MCF 10A (cell line): ENCODE measurements at regions of chr18 and their contacts with region 1.

Region 1: GRCh38 chr18:58671111-58671631 is at the start of gene MALT1:
- DNase-seq: peak; percentile 91
- H3K4me3 Mint-ChIP-seq: peak within 1 kb of the TSS; percentile 97
- H3K27ac Mint-ChIP-seq: peak within 1 kb of the TSS; percentile 78
- H3K4me1 Mint-ChIP-seq: peaks cover 55% of the 10 kb centered on the region
- H3K27me3 Mint-ChIP-seq: no peaks in the 10 kb centered on the region
- CTCF ChIP-seq: no peak
- total RNA-seq, gene MALT1: 28.5 and 33.0 TPM in 2 replicates

Region 2: GRCh38 chr18:58541789-58542425 is 129.3 kb before region 1 on chr18:
- CTCF ChIA-PET with region 1: no interaction called
- POLR2A ChIA-PET with region 1: interaction called, 32 read pairs
- intact Hi-C with region 1: loop called (anchors 2 kb)
- DNase-seq: peak; percentile 95
- H3K4me3 Mint-ChIP-seq: no peak overlapping the region
- H3K27ac Mint-ChIP-seq: peak overlapping the region; percentile 85
- H3K4me1 Mint-ChIP-seq: peaks cover 33% of the 10 kb centered on the region
- H3K27me3 Mint-ChIP-seq: no peaks in the 10 kb centered on the region
- CTCF ChIP-seq: no peak

Region 3: GRCh38 chr18:58611471-58612131 is 59.6 kb before region 1 on chr18:
- CTCF ChIA-PET with region 1: no interaction called
- POLR2A ChIA-PET with region 1: interaction called, 31 read pairs
- intact Hi-C with region 1: loop called (anchors 5 kb)
- DNase-seq: peak; percentile 55
- H3K4me3 Mint-ChIP-seq: peak overlapping the region; percentile 39
- H3K27ac Mint-ChIP-seq: peak overlapping the region; percentile 57
- H3K4me1 Mint-ChIP-seq: peaks cover 18% of the 10 kb centered on the region
- H3K27me3 Mint-ChIP-seq: no peaks in the 10 kb centered on the region
- CTCF ChIP-seq: no peak

Region 4: GRCh38 chr18:58653814-58654509 is 17.2 kb before region 1 on chr18:
- CTCF ChIA-PET with region 1: interaction called, 3 read pairs
- POLR2A ChIA-PET with region 1: interaction called, 22 read pairs
- intact Hi-C with region 1: no loop called
- DNase-seq: no peak
- H3K4me3 Mint-ChIP-seq: no peak overlapping the region
- H3K27ac Mint-ChIP-seq: peak overlapping the region; percentile 5
- H3K4me1 Mint-ChIP-seq: peaks cover 23% of the 10 kb centered on the region
- H3K27me3 Mint-ChIP-seq: no peaks in the 10 kb centered on the region
- CTCF ChIP-seq: no peak

Region 5: DNA sequence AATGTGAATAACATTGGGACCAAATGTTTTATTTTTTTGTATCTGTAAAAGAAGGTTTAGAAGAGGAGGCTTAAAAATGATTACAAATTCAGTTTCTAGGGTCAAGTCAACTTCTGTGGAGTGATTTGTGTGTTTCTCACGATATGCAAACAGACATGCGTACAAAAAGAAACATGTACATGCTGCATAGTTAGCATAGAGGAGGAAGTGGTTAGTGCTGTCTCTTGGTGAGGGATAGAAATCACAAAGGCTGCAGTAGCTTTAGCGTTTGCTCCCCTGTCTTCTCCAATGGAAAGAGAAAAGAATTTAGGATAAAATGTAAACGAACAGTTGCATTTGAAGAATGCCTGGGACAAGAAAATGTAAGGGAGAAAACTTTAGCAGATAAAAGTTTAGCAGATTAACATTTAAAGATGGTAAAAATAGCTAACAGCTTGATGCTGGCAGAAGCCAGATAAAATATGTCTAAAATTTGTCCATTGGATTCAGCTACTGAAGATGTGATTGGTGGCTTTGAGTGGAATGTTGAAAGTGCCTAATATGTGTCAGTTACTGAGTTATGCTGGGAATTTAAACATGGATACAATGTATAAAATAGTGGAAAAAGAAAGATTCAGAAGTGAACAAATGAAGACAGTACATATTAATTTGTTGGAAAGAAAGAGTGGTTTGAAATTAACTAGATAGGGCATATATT is 45.0 kb after region 1 on chr18:
- CTCF ChIA-PET with region 1: no interaction called
- POLR2A ChIA-PET with region 1: interaction called, 23 read pairs
- intact Hi-C with region 1: no loop called
- DNase-seq: no peak
- H3K4me3 Mint-ChIP-seq: no peak overlapping the region
- H3K27ac Mint-ChIP-seq: no peak overlapping the region
- H3K4me1 Mint-ChIP-seq: no peaks in the 10 kb centered on the region
- H3K27me3 Mint-ChIP-seq: no peaks in the 10 kb centered on the region
- CTCF ChIP-seq: no peak